Endothelial cell of umbilical vein (primary cell): ENCODE measurements at regions of chr20 and their contacts with region 1.

Region 1: GRCh38 chr20:5126512-5127203 is at the start of gene CDS2:
- DNase-seq: peak; percentile 100
- H3K4me3 ChIP-seq: peak within 1 kb of the TSS; percentile 55 to 87 (median 73)
- H3K27ac ChIP-seq: peak within 1 kb of the TSS; percentile 63
- H3K4me1 ChIP-seq: peaks cover 10% of the 10 kb centered on the region
- H3K27me3 ChIP-seq: no peaks in the 10 kb centered on the region
- CTCF ChIP-seq: peak; percentile 28 to 59
- POLR2A ChIP-seq: peak; percentile 19
- total RNA-seq, gene CDS2: 48.1 and 49.0 TPM in 2 replicates

Region 2: GRCh38 chr20:5156675-5157448 is 30.2 kb after region 1 on chr20:
- CTCF ChIA-PET with region 1: interaction called, 19 read pairs
- POLR2A ChIA-PET with region 1: no interaction called
- dilution Hi-C with region 1: no loop called
- intact Hi-C with region 1: no loop called
- DNase-seq: peak; percentile 45
- H3K4me3 ChIP-seq: no peak overlapping the region
- H3K27ac ChIP-seq: peak overlapping the region; percentile 50
- H3K4me1 ChIP-seq: peaks cover 22% of the 10 kb centered on the region
- H3K27me3 ChIP-seq: no peaks in the 10 kb centered on the region
- CTCF ChIP-seq: no peak
- POLR2A ChIP-seq: no peak

Region 3: GRCh38 chr20:5181956-5182355 is 55.3 kb after region 1 on chr20:
- CTCF ChIA-PET with region 1: interaction called, 40 read pairs
- POLR2A ChIA-PET with region 1: no interaction called
- dilution Hi-C with region 1: no loop called
- intact Hi-C with region 1: no loop called
- DNase-seq: peak; percentile 36
- H3K4me3 ChIP-seq: no peak overlapping the region
- H3K27ac ChIP-seq: peak overlapping the region; percentile 39
- H3K4me1 ChIP-seq: peaks cover 19% of the 10 kb centered on the region
- H3K27me3 ChIP-seq: no peaks in the 10 kb centered on the region
- CTCF ChIP-seq: no peak
- POLR2A ChIP-seq: no peak

Region 4: DNA sequence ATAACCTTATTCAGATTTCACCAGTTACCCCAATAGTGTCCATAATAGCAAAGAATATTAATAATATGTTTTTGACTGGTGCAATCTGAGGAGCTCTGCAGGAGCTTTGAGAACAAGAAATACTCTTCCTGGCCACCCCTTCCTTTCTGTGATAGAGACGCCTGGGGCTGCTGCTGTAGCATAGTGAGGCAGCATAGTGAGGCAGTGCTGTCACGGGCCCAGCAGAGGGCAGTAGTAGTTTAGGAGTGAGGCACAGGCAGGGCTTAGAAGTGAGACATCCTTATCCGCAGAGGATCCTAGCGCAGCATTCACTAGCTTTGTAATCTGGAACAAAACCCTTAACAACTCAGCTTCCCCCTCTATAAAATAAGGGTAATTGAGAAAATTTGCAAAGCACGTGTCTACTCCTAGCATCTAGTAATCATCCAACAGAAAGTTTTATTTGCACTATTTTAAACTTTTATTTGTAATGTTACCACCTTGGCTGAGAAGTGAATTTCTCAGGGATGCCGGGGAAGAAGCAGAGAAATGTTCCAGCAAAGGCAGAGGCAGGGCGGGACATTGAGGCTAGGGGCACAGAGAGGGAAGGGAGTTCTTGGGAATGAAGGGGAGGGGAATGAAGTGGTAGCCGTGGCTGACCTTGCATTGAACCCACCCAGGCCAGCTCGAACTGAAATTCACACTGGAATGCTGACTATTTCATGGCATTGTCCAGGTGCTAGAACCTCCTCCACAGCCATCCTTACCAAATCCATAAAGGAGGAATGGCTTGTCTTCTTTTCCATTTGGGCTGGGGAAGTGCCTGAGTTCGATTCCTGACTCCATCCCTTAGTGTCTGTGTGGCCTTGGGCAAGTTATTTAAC is 78.9 kb after region 1 on chr20:
- CTCF ChIA-PET with region 1: interaction called, 22 read pairs
- POLR2A ChIA-PET with region 1: no interaction called
- dilution Hi-C with region 1: no loop called
- intact Hi-C with region 1: no loop called
- DNase-seq: peak; percentile 78
- H3K4me3 ChIP-seq: no peak overlapping the region
- H3K27ac ChIP-seq: no peak overlapping the region
- H3K4me1 ChIP-seq: no peaks in the 10 kb centered on the region
- H3K27me3 ChIP-seq: no peaks in the 10 kb centered on the region
- CTCF ChIP-seq: peak; percentile 93
- POLR2A ChIP-seq: no peak

Region 5: DNA sequence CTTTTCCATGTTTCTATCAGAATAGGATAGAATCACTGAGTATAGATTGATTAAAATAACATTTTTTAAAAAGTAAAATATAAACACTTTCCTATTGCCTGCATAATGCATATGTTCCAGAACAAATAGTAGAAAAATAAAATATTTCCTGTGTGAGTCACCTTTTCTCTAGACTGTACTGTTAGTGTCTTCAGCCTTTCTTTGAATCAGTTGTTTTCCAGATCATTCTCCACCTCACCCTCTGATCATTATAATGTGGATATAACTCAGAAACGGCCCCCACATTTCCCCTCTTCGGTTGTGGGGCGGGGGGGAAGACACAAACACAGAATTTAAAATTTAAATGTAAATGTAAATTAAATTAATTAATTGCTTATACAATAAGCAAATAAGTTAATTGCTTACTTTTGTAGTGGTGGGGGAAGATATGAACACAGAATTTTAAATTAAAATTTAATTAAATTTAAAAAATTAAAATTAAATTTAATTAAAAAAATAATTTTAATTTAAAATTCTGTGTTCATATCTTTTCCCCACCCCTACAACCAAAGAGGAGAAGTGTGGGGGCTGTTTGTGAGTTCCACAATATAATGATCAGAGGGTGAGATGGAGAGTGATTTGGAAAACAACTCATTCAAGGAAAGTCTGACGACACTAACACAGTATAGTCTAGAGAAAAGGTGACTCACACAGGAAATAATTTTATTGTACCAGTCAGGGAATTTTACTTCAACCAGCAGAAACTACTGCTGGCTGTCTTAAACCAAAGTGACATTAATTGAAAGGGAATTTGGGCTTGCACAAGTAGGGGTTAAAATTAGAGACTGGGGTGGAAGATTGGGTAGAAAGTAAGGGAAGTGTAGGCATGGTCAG is 227.2 kb after region 1 on chr20:
- CTCF ChIA-PET with region 1: no interaction called
- POLR2A ChIA-PET with region 1: no interaction called
- dilution Hi-C with region 1: no loop called
- intact Hi-C with region 1: loop called (anchors 10 kb)
- DNase-seq: peak; percentile 88
- H3K4me3 ChIP-seq: peak overlapping the region in 1 of 3 experiments; percentile 25
- H3K27ac ChIP-seq: peak overlapping the region; percentile 92
- H3K4me1 ChIP-seq: peaks cover 30% of the 10 kb centered on the region
- H3K27me3 ChIP-seq: no peaks in the 10 kb centered on the region
- CTCF ChIP-seq: no peak
- POLR2A ChIP-seq: no peak